Activated CD8-positive, alpha-beta T cell treated with anti-CD3 and anti-CD28 coated beads, Interleukin-2, amount 10 ng/mL, durations not matched to agents 7 days and 5 days (primary cell): ENCODE measurements at regions of chr12 and their contacts with region 1.

Region 1: DNA sequence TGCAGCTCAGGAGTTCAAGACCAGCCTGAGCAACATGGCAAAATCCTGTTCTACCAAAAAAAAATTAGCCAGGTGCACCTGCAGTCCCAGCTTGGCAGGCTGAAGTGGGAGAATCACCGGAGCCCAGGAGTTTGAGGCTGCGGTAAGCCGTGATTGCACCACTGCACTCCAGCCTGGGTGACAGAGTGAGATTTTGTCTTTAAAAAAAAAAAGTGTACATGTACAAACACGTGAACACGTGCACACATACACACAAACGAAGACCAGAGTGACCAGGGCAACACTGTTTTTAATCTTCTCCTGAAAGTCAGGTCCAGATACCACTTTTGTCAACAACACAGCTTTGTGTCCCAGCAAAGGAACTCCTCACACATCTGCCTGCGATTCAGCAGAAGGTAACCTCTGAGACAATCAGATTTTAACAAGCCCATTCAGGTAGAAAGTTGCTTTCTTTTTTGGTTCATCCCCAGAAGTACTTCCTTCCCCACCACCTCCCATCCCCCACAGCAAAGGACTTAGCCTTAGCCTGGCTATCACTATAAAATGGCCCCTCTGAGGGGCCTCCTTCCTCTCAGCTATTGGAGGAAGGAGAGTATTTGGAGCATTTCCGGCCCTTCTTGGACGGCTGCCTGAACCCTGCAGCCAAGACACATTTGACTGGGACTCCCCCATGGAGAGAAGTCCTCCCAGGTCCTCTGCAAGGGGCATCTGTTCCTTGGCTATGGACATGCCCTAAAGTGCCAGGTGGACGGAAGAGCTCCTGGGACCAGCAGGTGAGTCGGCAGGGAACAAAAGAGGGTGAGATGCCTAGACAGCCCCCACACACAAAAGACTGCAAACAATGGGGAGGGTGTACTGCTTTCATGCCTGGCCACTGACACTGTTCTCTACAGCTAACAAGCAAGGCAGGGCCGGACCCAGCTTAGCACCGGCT is 9.8 kb downstream of the CTDSP2 start:
- DNase-seq: peak; percentile 70
- ATAC-seq: peak; percentile 49
- H3K4me3 Mint-ChIP-seq: peak overlapping the region; percentile 45
- H3K27ac Mint-ChIP-seq: peak overlapping the region; percentile 90
- H3K4me1 Mint-ChIP-seq: peaks cover 93% of the 10 kb centered on the region
- H3K27me3 Mint-ChIP-seq: no peaks in the 10 kb centered on the region

Region 2: GRCh38 chr12:57744777-57745484 is 91.8 kb before region 1 on chr12 and contains the start of gene TSPAN31:
- CTCF ChIA-PET with region 1: no interaction called
- POLR2A ChIA-PET with region 1: no interaction called
- DNase-seq: peak; percentile 98
- ATAC-seq: peak; percentile 80
- H3K4me3 Mint-ChIP-seq: peak within 1 kb of the TSS; percentile 92
- H3K27ac Mint-ChIP-seq: peak within 1 kb of the TSS; percentile 94
- H3K4me1 Mint-ChIP-seq: peaks cover 53% of the 10 kb centered on the region
- H3K27me3 Mint-ChIP-seq: no peaks in the 10 kb centered on the region
- total RNA-seq, gene TSPAN31: 12.9 to 13.3 TPM

Region 3: DNA sequence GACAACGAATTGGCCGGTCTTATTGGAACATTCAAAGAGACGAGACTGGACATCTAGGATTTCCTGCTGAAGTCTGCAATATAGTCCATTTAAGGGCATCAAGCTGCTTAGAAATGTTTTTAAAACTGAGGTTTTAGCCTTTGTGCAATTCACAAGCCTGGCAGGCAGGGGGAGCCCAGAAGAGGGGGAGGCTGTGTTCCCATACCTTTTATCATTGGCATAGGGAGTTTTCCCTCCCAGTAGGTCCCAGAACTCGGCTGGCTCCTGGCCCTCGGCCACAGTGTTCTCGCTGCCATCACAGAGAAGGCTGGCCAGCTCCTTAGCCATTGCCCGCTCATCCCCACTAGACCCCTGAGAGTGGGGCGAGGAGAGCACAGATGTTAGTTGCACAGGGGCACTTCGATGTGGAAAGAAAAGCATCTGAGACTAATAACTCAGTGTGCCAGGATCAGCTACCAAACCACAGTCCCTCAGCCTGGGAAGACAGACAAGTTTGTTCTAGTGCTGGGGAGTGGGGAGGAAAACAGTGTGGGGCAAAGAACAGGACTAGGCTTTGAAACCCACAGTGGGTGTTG is 33.3 kb before region 1 on chr12:
- CTCF ChIA-PET with region 1: interaction called, 16 read pairs
- POLR2A ChIA-PET with region 1: no interaction called
- DNase-seq: peak; percentile 49
- ATAC-seq: no peak
- H3K4me3 Mint-ChIP-seq: no peak overlapping the region
- H3K27ac Mint-ChIP-seq: no peak overlapping the region
- H3K4me1 Mint-ChIP-seq: no peaks in the 10 kb centered on the region
- H3K27me3 Mint-ChIP-seq: no peaks in the 10 kb centered on the region

Region 4: GRCh38 chr12:57846577-57847319 is 10.0 kb after region 1 on chr12 and contains the start of gene CTDSP2:
- CTCF ChIA-PET with region 1: interaction called, 33 read pairs
- POLR2A ChIA-PET with region 1: interaction called, 8 read pairs
- DNase-seq: peak; percentile 89
- ATAC-seq: peak; percentile 56
- H3K4me3 Mint-ChIP-seq: peak within 1 kb of the TSS; percentile 81
- H3K27ac Mint-ChIP-seq: peak within 1 kb of the TSS; percentile 66
- H3K4me1 Mint-ChIP-seq: peaks cover 43% of the 10 kb centered on the region
- H3K27me3 Mint-ChIP-seq: peaks cover 27% of the 10 kb centered on the region
- total RNA-seq, gene CTDSP2: 100 to 114 TPM